Ascending aorta (tissue), 2 donors: ENCODE measurements at regions of chr3 and their contacts with region 1.

Region 1: DNA sequence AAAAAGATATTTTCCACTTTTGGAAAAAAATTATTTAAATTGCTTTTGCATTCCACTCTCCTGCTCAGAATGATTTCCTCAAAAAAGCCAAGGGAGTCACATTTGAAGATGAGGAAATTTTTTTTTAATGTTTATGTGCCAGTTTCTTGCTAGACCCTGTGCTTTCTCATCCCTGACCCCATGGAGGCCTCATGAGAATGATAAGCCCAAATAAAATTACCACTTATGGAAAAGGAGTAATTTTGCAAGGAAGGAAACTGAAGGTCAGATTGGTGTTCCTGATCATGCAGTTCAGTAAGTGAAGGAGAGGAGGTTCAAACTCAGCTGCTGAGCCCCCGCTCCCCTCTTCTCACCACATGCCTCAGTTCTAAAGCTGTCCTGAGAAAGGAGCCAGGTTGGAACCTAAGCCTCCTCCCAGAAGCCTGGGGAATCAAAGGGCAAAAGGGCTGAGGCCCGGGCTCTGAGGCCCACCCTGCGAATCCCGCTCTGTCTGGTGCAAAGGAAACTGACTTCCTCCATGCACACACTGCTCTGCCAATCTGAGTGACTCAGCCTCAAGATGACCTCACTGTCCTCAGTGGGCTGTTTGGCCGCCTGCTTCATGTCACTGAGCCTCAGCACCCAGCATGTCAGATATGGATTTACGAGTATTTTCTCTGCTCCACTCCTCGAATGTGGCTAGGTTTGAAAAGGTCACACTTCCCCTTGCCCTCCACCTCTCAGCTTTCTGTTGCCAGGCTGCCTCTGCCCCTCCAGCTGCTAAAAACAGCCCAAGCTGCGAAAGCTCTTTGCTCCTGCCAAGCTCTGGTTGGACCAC is 56.9 kb upstream of the FLNB start:
- DNase-seq: peak; percentile 74 to 90
- H3K4me3 ChIP-seq: peak overlapping the region in 1 of 2 donors; percentile 19
- H3K27ac ChIP-seq: peak overlapping the region; percentile 93 to 97
- H3K4me1 ChIP-seq: peaks cover 6 to 29% of the 10 kb centered on the region in 2 donors
- H3K27me3 ChIP-seq: no peaks in the 10 kb centered on the region
- CTCF ChIP-seq: no peak

Region 2: DNA sequence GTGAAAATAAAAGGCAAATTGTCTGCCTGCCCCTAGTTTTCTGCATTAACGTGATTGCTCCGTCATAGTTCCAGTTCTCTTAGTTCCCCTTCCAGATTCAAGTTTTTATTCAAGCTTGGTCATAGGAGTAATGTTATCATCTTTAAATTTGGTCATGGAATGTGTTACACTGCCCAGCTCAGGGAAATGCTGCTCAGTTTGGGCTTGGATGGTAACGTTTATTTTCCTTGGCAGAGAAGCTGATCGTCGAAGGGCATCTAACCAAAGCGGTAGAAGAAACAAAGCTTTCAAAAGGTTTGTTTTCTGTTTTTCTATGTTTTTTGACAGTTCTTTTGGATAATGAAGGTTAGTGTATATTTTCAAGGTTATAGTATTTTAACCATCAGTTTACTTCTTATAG is 61.5 kb before region 1 on chr3:
- intact Hi-C with region 1: loop called (anchors 10 kb)
- DNase-seq: peak in 1 of 2 donors; percentile 83
- H3K4me3 ChIP-seq: peak overlapping the region; percentile 48 to 65
- H3K27ac ChIP-seq: peak overlapping the region; percentile 85 to 87
- H3K4me1 ChIP-seq: peaks cover 8 to 14% of the 10 kb centered on the region in 2 donors
- H3K27me3 ChIP-seq: no peaks in the 10 kb centered on the region
- CTCF ChIP-seq: no peak

Region 3: DNA sequence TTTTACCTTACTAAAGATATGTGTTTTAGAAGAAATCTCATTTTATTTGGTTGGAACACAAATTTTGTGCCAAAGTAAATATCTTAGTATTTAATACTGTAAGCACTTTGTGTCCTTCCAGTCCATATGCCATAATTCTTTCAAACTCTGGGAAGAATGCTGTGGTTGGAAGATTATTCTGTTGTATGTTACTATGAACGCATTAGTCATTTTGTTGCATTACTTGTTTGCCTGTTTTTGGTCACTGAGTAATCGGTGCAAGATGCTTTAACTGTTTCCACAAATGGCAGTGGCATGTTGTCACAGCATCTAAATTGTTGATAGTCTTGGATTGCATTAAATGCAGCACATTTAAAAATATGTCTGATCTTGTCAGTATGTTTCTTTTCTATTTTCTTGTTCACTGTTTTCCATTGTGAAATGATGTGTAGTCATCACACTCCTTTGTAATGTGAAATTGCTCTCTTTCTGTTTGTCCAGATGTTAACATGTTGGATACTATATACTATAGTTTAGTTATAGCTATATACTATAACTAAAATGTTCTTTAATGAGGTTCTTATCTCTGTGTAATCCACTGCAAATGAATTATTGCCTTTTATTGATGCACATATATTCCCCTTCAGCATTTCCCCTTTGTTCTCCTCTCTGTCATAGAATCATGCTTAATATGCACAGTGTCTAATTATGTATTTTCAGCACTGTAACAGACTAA is 33.0 kb before region 1 on chr3:
- intact Hi-C with region 1: loop called (anchors 5 kb)
- DNase-seq: no peak
- H3K4me3 ChIP-seq: no peak overlapping the region
- H3K27ac ChIP-seq: peak overlapping the region; percentile 43 to 72
- H3K4me1 ChIP-seq: peaks cover 0 to 33% of the 10 kb centered on the region in 2 donors
- H3K27me3 ChIP-seq: no peaks in the 10 kb centered on the region
- CTCF ChIP-seq: no peak